ENCODE measurements at regions of chr7 and their contacts with region 1.

Region 1: GRCh38 chr7:100428199-100428966 is at the start of gene ZCWPW1:
- DNase-seq: peak; percentile 90 to 95
- ATAC-seq: peak; percentile 67 to 68
- H3K4me3 ChIP-seq: peak within 1 kb of the TSS; percentile 74 to 88 (median 83)
- H3K27ac ChIP-seq: peak within 1 kb of the TSS; percentile 90 to 99 (median 98)
- H3K4me1 ChIP-seq: peaks cover 24 to 29% of the 10 kb centered on the region in 2 donors
- H3K27me3 ChIP-seq: no peaks in the 10 kb centered on the region
- CTCF ChIP-seq: peak in 2 of 5 experiments; percentile 5 to 17
- POLR2A ChIP-seq: peak; percentile 98 to 99
- total RNA-seq, gene ZCWPW1: 1.6 to 8.5 (median 2.7) TPM

Region 2: DNA sequence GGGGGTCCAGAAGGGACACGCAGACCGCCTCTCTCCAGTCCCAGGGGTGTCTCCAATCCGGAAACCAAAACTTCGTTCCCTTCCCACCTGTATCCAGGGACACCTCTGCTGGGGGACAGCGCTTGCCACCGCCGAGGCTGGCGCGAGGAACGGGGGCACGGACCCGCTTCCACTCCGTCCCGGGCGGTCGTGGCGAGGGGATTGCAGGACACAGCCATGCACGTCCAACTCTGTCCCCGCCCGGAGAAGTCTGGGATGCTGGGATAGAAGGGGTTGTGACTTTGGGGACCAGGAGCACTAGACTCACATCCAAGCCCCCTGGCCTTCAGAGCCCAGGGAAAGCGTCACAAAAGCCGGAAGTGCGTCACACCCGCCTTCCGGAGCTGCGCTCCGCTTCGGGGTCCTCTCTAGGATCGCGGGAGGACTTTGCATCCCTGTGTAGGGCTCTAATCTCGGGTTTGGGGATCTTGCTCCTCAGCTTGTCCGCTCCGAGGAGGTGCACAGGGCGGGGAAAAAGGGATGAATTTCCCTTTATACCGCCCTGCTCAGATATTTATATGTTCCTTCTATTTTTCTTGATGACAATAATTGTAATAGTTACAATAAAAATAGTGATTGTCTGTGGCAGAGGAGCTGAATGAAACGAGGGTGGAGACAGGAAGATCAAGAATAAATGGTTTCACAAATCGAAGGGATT is 876.5 kb before region 1 on chr7 and contains the start of gene FAM200A:
- in situ Hi-C with region 1: no loop called
- intact Hi-C with region 1: loop called (anchors 10 kb)
- DNase-seq: peak; percentile 74 to 76
- ATAC-seq: peak; percentile 97 to 98
- H3K4me3 ChIP-seq: peak within 1 kb of the TSS; percentile 92 to 99 (median 96)
- H3K27ac ChIP-seq: peak within 1 kb of the TSS; percentile 83 to 94 (median 92)
- H3K4me1 ChIP-seq: peaks cover 14 to 15% of the 10 kb centered on the region in 2 donors
- H3K27me3 ChIP-seq: no peaks in the 10 kb centered on the region
- CTCF ChIP-seq: no peak
- POLR2A ChIP-seq: peak; percentile 65 to 81
- total RNA-seq, gene FAM200A: 2.3 to 5.7 (median 3.8) TPM

Region 3: GRCh38 chr7:100538654-100539435 is 110.5 kb after region 1 on chr7 and contains the start of gene AGFG2:
- in situ Hi-C with region 1: no loop called
- intact Hi-C with region 1: loop called (anchors 2 kb)
- DNase-seq: peak; percentile 100
- ATAC-seq: peak; percentile 98
- H3K4me3 ChIP-seq: peak within 1 kb of the TSS; percentile 74 to 97 (median 82)
- H3K27ac ChIP-seq: peak within 1 kb of the TSS; percentile 60 to 85 (median 80)
- H3K4me1 ChIP-seq: peaks cover 8 to 20% of the 10 kb centered on the region in 2 donors
- H3K27me3 ChIP-seq: no peaks in the 10 kb centered on the region
- CTCF ChIP-seq: no peak
- POLR2A ChIP-seq: peak; percentile 39 to 53
- total RNA-seq, gene AGFG2: 10.7 to 16.4 (median 13.5) TPM

Region 4: GRCh38 chr7:100942045-100942768 is 513.8 kb after region 1 on chr7:
- in situ Hi-C with region 1: no loop called
- intact Hi-C with region 1: no loop called
- DNase-seq: no peak
- ATAC-seq: no peak
- H3K4me3 ChIP-seq: no peak overlapping the region
- H3K27ac ChIP-seq: no peak overlapping the region
- H3K4me1 ChIP-seq: no peaks in the 10 kb centered on the region
- H3K27me3 ChIP-seq: no peaks in the 10 kb centered on the region
- CTCF ChIP-seq: no peak
- POLR2A ChIP-seq: no peak